Activated naive CD4-positive, alpha-beta T cell treated with anti-CD3 and anti-CD28 coated beads, Interleukin-2, amount 10 ng/mL, durations not matched to agents 7 days and 5 days (primary cell): ENCODE measurements at regions of chrX and their contacts with region 1.

Region 1: GRCh38 chrX:137051978-137052642 is 18.3 kb upstream of the GPR101 start:
- DNase-seq: peak; percentile 83
- H3K4me3 Mint-ChIP-seq: peak overlapping the region; percentile 74
- H3K27ac Mint-ChIP-seq: no peak overlapping the region
- H3K4me1 Mint-ChIP-seq: peaks cover 17% of the 10 kb centered on the region
- H3K27me3 Mint-ChIP-seq: peaks cover 56% of the 10 kb centered on the region

Region 2: DNA sequence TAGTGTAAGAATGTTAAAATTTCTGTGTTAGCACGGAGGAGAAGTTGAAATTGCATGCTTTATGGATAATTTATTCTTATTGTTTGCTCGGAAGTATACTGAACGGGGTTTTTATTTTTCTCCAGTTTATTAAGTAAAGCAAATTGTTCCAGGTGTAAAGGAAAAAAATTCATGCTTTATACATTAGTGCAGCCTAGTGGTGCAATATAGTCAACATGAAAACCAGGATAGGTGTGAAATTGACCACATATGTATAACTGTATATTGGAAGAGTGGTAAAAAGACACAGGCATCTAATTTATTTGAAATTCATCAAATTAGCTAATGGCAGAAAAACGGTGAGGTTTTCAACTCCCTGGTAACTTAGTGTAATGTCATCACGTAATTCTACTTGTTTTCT is 563.4 kb before region 1 on chrX:
- CTCF ChIA-PET with region 1: no interaction called
- DNase-seq: no peak
- H3K4me3 Mint-ChIP-seq: no peak overlapping the region
- H3K27ac Mint-ChIP-seq: no peak overlapping the region
- H3K4me1 Mint-ChIP-seq: no peaks in the 10 kb centered on the region
- H3K27me3 Mint-ChIP-seq: peaks cover 36% of the 10 kb centered on the region

Region 3: GRCh38 chrX:136953867-136954787 is 98.0 kb before region 1 on chrX:
- CTCF ChIA-PET with region 1: interaction called, 29 read pairs
- DNase-seq: peak; percentile 73
- H3K4me3 Mint-ChIP-seq: no peak overlapping the region
- H3K27ac Mint-ChIP-seq: no peak overlapping the region
- H3K4me1 Mint-ChIP-seq: no peaks in the 10 kb centered on the region
- H3K27me3 Mint-ChIP-seq: no peaks in the 10 kb centered on the region

Region 4: DNA sequence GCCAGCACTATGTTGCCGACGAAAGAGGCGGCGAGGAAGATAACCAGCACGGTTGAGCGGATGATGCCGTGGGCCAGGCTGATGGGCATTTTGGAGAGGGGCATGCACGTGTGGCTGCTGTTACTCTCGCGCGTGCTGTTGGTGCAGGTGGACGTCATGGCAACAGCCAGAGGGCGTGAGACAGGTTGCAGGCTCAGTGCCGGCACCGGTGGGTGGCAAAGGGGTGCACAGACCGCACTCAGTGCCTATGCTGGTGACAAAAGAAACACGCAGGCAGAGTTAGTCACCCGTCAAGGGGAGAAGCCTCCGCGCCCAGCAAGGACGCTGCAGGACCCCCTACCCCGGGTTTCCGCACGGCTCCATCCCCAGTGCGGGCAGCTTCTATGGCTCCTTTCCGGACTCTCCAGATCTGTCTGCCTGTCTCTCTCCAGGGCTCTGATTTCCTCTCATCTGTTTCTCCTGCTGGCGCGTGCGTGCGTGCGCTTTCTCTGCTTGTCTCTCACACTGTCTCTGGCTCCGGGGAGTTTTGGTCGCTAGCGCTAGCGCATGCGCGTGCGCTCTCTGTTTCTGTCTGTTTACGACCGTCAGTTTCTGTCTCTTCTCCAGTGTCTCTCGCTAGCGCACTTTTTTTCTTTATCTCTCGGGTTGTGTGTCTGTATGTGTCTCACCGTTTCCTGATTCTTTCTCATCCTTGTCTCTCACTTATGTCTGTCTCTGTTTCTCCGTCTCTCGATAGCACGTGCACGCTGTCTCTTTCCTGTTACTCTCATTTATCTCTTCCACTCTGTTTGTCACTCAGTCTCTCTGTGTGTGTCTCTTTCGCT is 20.4 kb before region 1 on chrX:
- CTCF ChIA-PET with region 1: no interaction called
- DNase-seq: peak; percentile 63
- H3K4me3 Mint-ChIP-seq: no peak overlapping the region
- H3K27ac Mint-ChIP-seq: no peak overlapping the region
- H3K4me1 Mint-ChIP-seq: peaks cover 13% of the 10 kb centered on the region
- H3K27me3 Mint-ChIP-seq: peaks cover 28% of the 10 kb centered on the region